Activated naive CD4-positive, alpha-beta T cell treated with anti-CD3 and anti-CD28 coated beads for 36 hours (primary cell): ENCODE measurements at regions of chr6 and their contacts with region 1.

Region 1: GRCh38 chr6:127291495-127291894 is 24.8 kb downstream of the RNF146 start:
- DNase-seq: no peak
- H3K4me3 Mint-ChIP-seq: no peak overlapping the region
- H3K27ac Mint-ChIP-seq: no peak overlapping the region
- H3K4me1 Mint-ChIP-seq: peaks cover 47% of the 10 kb centered on the region
- H3K27me3 Mint-ChIP-seq: no peaks in the 10 kb centered on the region

Region 2: DNA sequence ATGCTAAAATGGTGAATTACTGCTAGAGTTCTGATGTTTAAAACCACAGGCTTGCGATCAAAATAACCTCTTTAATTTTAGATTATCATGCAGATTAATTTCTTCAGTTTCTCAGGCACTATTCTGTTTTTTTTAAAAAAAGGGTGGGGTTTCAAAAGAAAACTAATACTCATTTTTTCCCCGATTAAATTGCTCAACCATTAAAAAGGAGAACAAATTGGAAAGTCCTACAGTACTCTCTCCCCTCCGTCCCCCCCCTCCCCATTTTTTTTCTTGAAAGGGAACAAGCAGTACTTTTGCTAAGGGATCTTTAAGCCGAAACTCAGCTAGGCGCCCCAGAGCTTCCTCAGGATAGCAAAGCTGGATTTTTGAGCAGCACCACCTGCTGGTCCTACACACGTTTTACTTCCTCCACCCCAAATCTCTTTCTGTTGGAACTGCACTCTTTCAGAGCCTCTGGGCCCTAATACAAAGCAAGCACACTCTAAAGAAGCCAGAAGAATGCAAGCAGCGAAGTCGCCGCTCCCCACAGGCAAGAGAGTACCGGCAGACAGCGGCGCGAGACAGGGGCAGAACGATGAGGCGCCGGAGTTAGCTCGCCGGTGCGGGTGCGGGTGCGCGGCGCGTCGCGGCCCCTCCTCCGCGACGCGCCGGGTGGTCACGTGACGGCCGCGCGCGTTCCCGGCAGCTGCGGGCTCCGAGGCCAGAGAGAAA is 25.2 kb before region 1 on chr6 and contains the start of gene RNF146:
- CTCF ChIA-PET with region 1: interaction called, 12 read pairs
- intact Hi-C with region 1: loop called (anchors 1 kb)
- DNase-seq: peak; percentile 74
- H3K4me3 Mint-ChIP-seq: peak within 1 kb of the TSS; percentile 100
- H3K27ac Mint-ChIP-seq: peak within 1 kb of the TSS; percentile 100
- H3K4me1 Mint-ChIP-seq: peaks cover 25% of the 10 kb centered on the region
- H3K27me3 Mint-ChIP-seq: no peaks in the 10 kb centered on the region
- total RNA-seq, gene RNF146: 9.7 to 10.8 TPM